Cardiac septum (tissue), 1 donor: ENCODE measurements at regions of chr3 and their contacts with region 1.

Region 1: DNA sequence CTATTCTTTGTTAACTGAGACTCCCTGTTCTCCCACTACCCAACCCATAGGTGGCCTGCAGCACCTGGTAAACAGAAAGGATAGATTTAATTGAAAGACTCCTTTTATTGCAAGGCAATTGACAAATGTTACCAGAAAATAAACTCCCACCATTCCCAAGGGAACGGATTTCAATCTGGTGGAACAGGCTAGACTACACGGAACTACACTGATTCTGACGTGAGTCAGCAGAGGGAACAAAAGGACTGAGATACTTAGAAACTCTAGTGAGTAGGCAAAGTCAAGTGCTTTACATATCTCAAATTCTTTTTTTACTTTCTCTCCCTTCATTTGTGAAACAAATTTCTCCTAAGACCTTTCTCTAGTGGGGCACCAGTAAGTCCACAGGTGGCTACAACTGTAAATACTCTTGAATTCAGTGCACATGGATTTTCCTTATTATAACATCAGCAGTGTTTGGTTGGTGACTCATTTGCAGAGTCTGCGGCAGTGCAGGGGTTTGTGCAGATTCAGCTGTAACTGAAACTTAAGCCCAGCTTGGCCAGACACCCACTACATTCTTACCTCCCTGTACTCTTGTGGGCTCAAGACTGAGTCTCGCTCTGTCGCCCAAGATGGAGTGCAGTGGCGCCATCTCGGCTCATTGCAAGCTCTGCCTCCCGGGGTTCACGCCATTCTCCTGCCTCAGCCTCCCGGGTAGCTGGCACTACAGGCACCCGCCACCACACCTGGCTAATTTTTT is 34.3 kb upstream of the PLSCR2 start:
- DNase-seq: no peak

Region 2: DNA sequence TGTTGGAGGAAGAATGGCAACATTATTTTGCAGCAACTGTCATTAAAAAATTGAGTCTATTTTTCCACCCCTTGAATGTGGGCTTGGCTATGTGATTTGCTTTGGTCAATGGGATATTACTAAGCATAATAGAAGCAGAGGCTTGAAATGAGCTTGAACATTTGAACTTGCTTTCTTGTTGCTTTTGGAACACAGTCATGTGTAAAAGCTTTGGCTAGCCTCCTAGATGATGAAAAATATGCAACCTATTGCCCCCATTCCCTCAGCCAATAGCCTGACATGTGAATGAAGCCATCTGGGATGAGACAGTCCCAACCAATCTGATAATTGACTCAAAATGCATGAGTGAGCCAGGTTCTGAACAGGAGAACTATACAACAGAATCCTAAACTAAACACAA is 112.7 kb before region 1 on chr3:
- intact Hi-C with region 1: loop called (anchors 10 kb)
- DNase-seq: no peak

Region 3: GRCh38 chr3:146544002-146544928 is 40.6 kb after region 1 on chr3 and contains the start of gene PLSCR1:
- intact Hi-C with region 1: loop called (anchors 1 kb)
- DNase-seq: peak; percentile 96
- total RNA-seq, gene PLSCR1: 43.5 TPM